ENCODE measurements at regions of chr7 and their contacts with region 1.

Region 1: DNA sequence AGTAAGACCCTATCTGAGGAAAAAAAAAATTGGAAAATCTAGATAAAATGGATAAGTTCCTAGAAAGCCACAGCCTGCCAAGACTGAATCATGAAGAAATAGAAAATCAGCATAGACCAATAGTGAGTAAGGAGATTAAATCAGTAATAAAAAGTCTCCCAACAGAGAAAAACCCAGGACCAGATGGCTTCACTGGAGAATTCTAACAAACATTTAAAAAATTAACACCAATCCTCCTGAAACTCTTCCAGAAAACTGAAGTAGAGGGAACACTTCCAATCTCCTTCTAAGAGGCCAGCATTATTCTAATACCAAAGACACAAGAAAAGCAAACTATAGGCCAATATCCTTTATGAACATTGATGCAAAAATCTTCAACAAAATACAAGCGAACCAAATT is 8.8 kb upstream of the LIMK1 start:
- DNase-seq: no peak
- ATAC-seq: no peak
- H3K4me3 ChIP-seq: no peak overlapping the region
- H3K27ac ChIP-seq: no peak overlapping the region
- H3K4me1 ChIP-seq: peaks cover 7% of the 10 kb centered on the region; the same call in 1 of the 2 replicates
- H3K27me3 ChIP-seq: no peaks in the 10 kb centered on the region
- CTCF ChIP-seq: no peak
- POLR2A ChIP-seq: no peak
- RAD21 ChIP-seq: no peak

Region 2: GRCh38 chr7:73786588-73786987 is 288.2 kb before region 1 on chr7:
- CTCF ChIA-PET with region 1: no interaction called
- POLR2A ChIA-PET with region 1: no interaction called
- dilution Hi-C with region 1: no loop called
- in situ Hi-C with region 1: no loop called
- intact Hi-C with region 1: no loop called
- DNase-seq: no peak
- ATAC-seq: no peak
- H3K4me3 ChIP-seq: no peak overlapping the region
- H3K27ac ChIP-seq: no peak overlapping the region
- H3K4me1 ChIP-seq: no peaks in the 10 kb centered on the region
- H3K27me3 ChIP-seq: no peaks in the 10 kb centered on the region
- CTCF ChIP-seq: no peak
- POLR2A ChIP-seq: no peak
- RAD21 ChIP-seq: no peak

Region 3: GRCh38 chr7:73978661-73979563 is 95.9 kb before region 1 on chr7:
- CTCF ChIA-PET with region 1: no interaction called
- POLR2A ChIA-PET with region 1: no interaction called
- dilution Hi-C with region 1: no loop called
- in situ Hi-C with region 1: no loop called
- intact Hi-C with region 1: no loop called
- DNase-seq: no peak
- ATAC-seq: peak; percentile 40; the same call in 1 of the 2 replicates
- H3K4me3 ChIP-seq: no peak overlapping the region
- H3K27ac ChIP-seq: no peak overlapping the region
- H3K4me1 ChIP-seq: no peaks in the 10 kb centered on the region
- H3K27me3 ChIP-seq: no peaks in the 10 kb centered on the region
- CTCF ChIP-seq: peak; percentile 29
- POLR2A ChIP-seq: no peak
- RAD21 ChIP-seq: peak; percentile 31; the same call in 1 of the 2 replicates

Region 4: DNA sequence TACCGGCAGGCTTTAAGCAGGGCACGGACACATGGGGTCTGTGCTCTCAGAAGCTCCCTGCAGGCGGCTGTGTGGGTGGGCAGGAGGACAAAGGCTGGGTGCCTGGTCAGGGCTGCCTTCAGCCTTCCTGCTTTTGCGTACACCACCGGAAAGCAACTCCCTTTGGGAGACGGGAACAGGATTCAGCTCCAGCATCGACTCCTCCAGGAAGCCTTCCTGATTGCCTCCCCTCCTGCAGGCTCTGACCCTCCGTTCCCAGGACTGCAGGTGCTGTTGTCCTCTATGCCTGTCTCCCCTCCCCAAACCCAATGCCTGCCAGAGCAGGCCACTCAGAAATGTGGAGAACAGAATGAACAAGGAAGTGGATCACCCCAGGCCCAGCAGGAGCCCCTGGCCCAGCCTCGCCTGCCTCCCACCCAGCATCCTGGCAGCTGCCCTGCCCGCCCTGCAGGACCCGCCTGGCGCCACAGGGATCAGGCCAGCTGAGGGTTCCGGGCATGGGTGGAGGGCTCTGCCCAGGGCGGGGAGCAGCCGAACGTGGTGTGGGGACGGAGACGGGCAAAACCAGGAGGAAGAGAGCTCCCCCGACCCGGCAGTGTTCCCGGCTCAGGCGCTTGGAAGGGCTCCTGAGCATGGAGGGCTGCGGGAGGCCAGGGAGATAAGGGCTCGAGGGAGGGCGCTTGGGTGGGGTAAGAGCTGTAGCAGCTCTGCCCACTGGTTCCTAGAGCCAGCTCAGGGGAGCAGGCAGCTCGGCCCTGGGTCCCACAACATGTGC is 53.0 kb before region 1 on chr7:
- CTCF ChIA-PET with region 1: no interaction called
- POLR2A ChIA-PET with region 1: no interaction called
- dilution Hi-C with region 1: no loop called
- in situ Hi-C with region 1: no loop called
- intact Hi-C with region 1: no loop called
- DNase-seq: no peak
- ATAC-seq: no peak
- H3K4me3 ChIP-seq: no peak overlapping the region
- H3K27ac ChIP-seq: no peak overlapping the region
- H3K4me1 ChIP-seq: peaks cover 16% of the 10 kb centered on the region
- H3K27me3 ChIP-seq: no peaks in the 10 kb centered on the region
- CTCF ChIP-seq: no peak
- POLR2A ChIP-seq: no peak
- RAD21 ChIP-seq: no peak

Region 5: DNA sequence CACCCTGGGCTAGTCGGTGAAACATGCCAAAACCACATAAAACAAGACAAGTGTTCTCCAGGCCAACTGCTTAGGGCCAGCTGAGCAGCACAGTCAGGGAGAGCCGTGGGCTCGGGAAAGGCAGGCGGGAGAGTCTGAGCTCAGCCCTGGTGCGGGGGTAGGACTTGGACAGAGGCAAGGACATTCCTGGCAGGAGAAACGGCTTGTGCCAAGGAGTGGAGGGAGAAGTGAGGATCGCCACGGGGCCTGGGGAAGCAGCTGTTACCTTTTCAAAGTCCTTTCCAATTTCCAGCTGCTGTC is 42.6 kb before region 1 on chr7:
- CTCF ChIA-PET with region 1: no interaction called
- POLR2A ChIA-PET with region 1: no interaction called
- dilution Hi-C with region 1: no loop called
- in situ Hi-C with region 1: no loop called
- intact Hi-C with region 1: loop called (anchors 2 kb)
- DNase-seq: peak; percentile 77
- ATAC-seq: peak; percentile 75
- H3K4me3 ChIP-seq: no peak overlapping the region
- H3K27ac ChIP-seq: no peak overlapping the region
- H3K4me1 ChIP-seq: peaks cover 28% of the 10 kb centered on the region
- H3K27me3 ChIP-seq: no peaks in the 10 kb centered on the region
- CTCF ChIP-seq: no peak
- POLR2A ChIP-seq: no peak
- RAD21 ChIP-seq: no peak

Region 6: GRCh38 chr7:74173866-74174605 is 99.3 kb after region 1 on chr7 and contains the start of gene EIF4H:
- CTCF ChIA-PET with region 1: interaction called, 3 read pairs
- POLR2A ChIA-PET with region 1: no interaction called
- dilution Hi-C with region 1: no loop called
- in situ Hi-C with region 1: loop called (anchors 5 kb)
- intact Hi-C with region 1: loop called (anchors 5 kb)
- DNase-seq: peak; percentile 95
- ATAC-seq: peak; percentile 89
- H3K4me3 ChIP-seq: peak within 1 kb of the TSS; percentile 92
- H3K27ac ChIP-seq: peak within 1 kb of the TSS; percentile 89
- H3K4me1 ChIP-seq: peaks cover 9% of the 10 kb centered on the region
- H3K27me3 ChIP-seq: no peaks in the 10 kb centered on the region
- CTCF ChIP-seq: no peak
- POLR2A ChIP-seq: peak; percentile 95
- RAD21 ChIP-seq: peak; percentile 3; the same call in 1 of the 2 replicates
- total RNA-seq, gene EIF4H: 241 and 269 TPM in 2 replicates